GM23248 (cell line): ENCODE measurements at regions of chrX and their contacts with region 1.

Region 1: DNA sequence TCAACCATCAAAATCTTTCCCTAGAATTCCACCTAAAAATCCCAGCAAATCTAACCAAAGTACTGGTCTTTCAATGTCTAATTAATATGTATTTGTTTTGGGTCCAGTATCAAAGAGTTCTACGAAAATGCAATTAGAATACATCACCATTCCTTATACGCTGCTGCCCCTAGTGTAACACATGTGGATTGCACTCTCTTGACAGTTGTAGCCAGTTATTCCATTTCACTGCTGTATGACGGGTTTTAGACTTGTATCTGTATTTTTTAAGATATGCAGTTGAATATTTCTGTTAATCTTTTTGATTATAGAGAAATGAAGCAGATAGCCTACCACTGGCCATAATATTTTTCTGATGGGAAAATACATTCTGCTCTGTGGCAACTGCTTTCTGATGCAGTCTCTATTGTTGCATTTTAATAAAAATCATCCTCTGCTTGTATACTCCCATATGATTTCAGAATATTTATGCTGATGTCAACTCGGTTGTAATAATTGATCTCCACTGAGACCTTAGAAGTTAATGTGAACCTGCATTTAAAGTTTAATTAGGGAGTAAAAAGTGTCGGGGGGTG is 17.1 kb upstream of the PAGE2B start:
- DNase-seq: peak; percentile 48
- H3K4me3 ChIP-seq: peak overlapping the region; percentile 41
- H3K27ac ChIP-seq: no peak overlapping the region
- H3K4me1 ChIP-seq: no peaks in the 10 kb centered on the region
- H3K27me3 ChIP-seq: no peaks in the 10 kb centered on the region

Region 2: GRCh38 chrX:54695816-54696575 is 361.8 kb before region 1 on chrX:
- in situ Hi-C with region 1: loop called (anchors 25 kb)
- DNase-seq: peak; percentile 41
- H3K4me3 ChIP-seq: no peak overlapping the region
- H3K27ac ChIP-seq: peak overlapping the region; percentile 2; the same call in 1 of the 2 replicates
- H3K4me1 ChIP-seq: peaks cover 8% of the 10 kb centered on the region; the same call in 1 of the 2 replicates
- H3K27me3 ChIP-seq: no peaks in the 10 kb centered on the region

Region 3: DNA sequence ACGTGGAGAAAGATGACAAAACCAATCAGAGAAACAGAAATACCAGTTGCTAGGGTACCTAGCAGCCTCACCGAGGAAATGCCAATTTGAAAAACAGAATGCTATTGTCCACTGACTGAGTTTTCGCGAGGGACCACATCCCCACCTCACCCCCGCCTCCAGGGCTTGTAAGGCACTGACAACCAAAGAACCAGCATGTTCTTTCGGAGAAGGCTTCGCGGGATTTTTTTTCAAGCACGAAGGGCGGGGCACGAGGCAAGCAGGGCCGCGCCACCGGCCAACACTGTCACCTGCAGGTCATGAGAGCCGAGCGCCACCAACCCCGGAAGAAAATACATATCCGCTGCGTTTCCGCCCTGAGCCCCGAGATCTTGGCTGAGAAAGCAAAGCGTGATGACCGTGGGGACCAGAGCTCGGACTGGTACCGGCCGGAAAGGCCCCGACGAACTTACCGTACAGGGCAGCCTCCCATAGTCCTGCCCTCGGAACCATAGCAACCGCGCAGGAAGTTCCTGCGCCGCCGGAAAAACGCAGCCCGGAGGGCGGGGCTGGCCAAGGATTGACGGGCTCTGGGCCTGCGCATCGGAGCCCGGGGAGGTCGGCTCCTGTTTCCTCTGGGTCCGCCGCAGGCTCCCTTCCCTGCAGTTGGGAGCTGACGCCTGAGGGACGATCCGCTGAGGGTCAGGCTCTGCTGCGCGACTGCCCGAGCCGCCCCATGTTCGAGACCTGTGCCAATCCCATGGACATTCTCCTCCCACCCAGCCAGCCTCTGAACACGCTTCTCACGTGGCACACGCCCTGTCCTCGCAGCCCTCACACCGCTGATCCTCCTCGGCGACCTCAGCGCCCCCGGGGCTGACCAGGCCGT is 103.2 kb after region 1 on chrX:
- in situ Hi-C with region 1: loop called (anchors 25 kb)
- DNase-seq: peak; percentile 89
- H3K4me3 ChIP-seq: peak overlapping the region; percentile 98
- H3K27ac ChIP-seq: peak overlapping the region; percentile 84
- H3K4me1 ChIP-seq: peaks cover 6% of the 10 kb centered on the region; the same call in 1 of the 2 replicates
- H3K27me3 ChIP-seq: no peaks in the 10 kb centered on the region